ENCODE measurements at regions of chr17 and their contacts with region 1.

Region 1: GRCh38 chr17:53736516-53737240 is 86.0 kb upstream of the KIF2B start:
- DNase-seq: no peak
- ATAC-seq: no peak
- H3K4me3 ChIP-seq: no peak overlapping the region
- H3K4me3 Mint-ChIP-seq: no peak overlapping the region
- H3K27ac ChIP-seq: no peak overlapping the region
- H3K27ac Mint-ChIP-seq: no peak overlapping the region
- H3K4me1 ChIP-seq: no peaks in the 10 kb centered on the region
- H3K4me1 Mint-ChIP-seq: no peaks in the 10 kb centered on the region
- H3K27me3 ChIP-seq: no peaks in the 10 kb centered on the region
- H3K27me3 Mint-ChIP-seq: no peaks in the 10 kb centered on the region

Region 2: DNA sequence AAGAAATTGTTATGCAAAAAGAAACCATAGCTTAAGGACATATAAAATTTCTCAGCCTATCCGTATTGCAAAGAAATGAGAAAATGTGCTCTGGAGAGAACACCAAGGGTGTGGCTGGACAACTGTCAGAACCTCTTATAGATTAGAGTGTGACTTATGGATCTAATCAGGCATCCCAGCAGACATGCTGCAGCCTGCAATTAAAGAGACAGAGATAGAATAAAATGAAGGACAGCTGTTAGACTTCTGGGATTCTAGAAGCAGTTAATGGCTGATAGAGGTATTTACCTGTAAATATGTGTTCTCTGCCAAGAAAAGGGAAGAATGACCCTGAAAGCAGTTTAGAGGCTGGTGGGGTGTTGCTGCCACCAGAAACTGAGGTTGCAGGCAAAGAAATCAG is 74.1 kb before region 1 on chr17:
- CTCF ChIA-PET with region 1: no interaction called
- POLR2A ChIA-PET with region 1: no interaction called
- intact Hi-C with region 1: no loop called
- DNase-seq: no peak
- ATAC-seq: no peak
- H3K4me3 ChIP-seq: no peak overlapping the region
- H3K4me3 Mint-ChIP-seq: no peak overlapping the region
- H3K27ac ChIP-seq: no peak overlapping the region
- H3K27ac Mint-ChIP-seq: no peak overlapping the region
- H3K4me1 ChIP-seq: no peaks in the 10 kb centered on the region
- H3K4me1 Mint-ChIP-seq: no peaks in the 10 kb centered on the region
- H3K27me3 ChIP-seq: no peaks in the 10 kb centered on the region
- H3K27me3 Mint-ChIP-seq: no peaks in the 10 kb centered on the region

Region 3: GRCh38 chr17:53765609-53766008 is 28.9 kb after region 1 on chr17:
- CTCF ChIA-PET with region 1: no interaction called
- POLR2A ChIA-PET with region 1: no interaction called
- intact Hi-C with region 1: loop called in 1 of 2 experiments (anchors 2 kb)
- DNase-seq: no peak
- ATAC-seq: no peak
- H3K4me3 ChIP-seq: no peak overlapping the region
- H3K4me3 Mint-ChIP-seq: no peak overlapping the region
- H3K27ac ChIP-seq: no peak overlapping the region
- H3K27ac Mint-ChIP-seq: no peak overlapping the region
- H3K4me1 ChIP-seq: no peaks in the 10 kb centered on the region
- H3K4me1 Mint-ChIP-seq: no peaks in the 10 kb centered on the region
- H3K27me3 ChIP-seq: no peaks in the 10 kb centered on the region
- H3K27me3 Mint-ChIP-seq: no peaks in the 10 kb centered on the region

Measured in naive thymus-derived CD4-positive, alpha-beta T cell (primary cell).